ENCODE measurements at regions of chr19 and their contacts with region 1.

Region 1: GRCh38 chr19:41376241-41376997 is at the start of gene TMEM91:
- DNase-seq: peak in 2 of 3 donors; percentile 28 to 36
- H3K4me3 ChIP-seq: peak within 1 kb of the TSS in 6 of 7 experiments; percentile 43 to 85 (median 66)
- H3K27ac ChIP-seq: peak within 1 kb of the TSS in 1 of 2 experiments; percentile 25
- H3K4me1 ChIP-seq: peaks cover 3 to 31% (median 19%) of the 10 kb centered on the region in 4 experiments
- H3K27me3 ChIP-seq: no peaks in the 10 kb centered on the region

Region 2: GRCh38 chr19:41363753-41364523 is 12.5 kb before region 1 on chr19 and contains the start of gene B9D2:
- CTCF ChIA-PET with region 1: interaction called, 38 read pairs
- POLR2A ChIA-PET with region 1: no interaction called
- DNase-seq: peak; percentile 99 to 100 (median 99)
- H3K4me3 ChIP-seq: peak within 1 kb of the TSS; percentile 68 to 93 (median 88)
- H3K27ac ChIP-seq: peak within 1 kb of the TSS; percentile 100
- H3K4me1 ChIP-seq: peaks cover 8 to 54% (median 46%) of the 10 kb centered on the region in 4 experiments
- H3K27me3 ChIP-seq: no peaks in the 10 kb centered on the region

Region 3: DNA sequence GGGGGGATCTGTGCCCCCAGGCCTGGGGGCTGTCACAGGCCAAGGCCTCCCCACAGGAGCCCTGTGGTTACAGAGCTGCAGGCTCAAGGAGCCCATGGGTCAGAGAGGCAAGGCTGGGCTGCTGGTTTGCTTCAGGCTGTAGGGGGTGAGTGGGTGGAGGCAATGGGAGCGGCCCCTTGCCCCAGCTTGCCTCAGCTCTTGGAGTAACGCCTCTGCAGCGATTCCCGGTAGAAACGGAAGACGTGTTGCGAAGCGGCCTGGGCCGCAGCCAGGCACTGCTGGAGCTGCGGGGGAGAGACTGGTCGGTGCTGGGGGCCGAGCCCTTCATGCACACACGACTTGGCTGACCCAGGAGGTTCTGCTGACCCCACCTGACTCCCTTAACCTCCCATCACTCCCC is 10.0 kb after region 1 on chr19:
- CTCF ChIA-PET with region 1: interaction called, 10 read pairs
- POLR2A ChIA-PET with region 1: no interaction called
- DNase-seq: no peak
- H3K4me3 ChIP-seq: no peak overlapping the region
- H3K27ac ChIP-seq: no peak overlapping the region
- H3K4me1 ChIP-seq: no peaks in the 10 kb centered on the region
- H3K27me3 ChIP-seq: no peaks in the 10 kb centered on the region

Region 4: DNA sequence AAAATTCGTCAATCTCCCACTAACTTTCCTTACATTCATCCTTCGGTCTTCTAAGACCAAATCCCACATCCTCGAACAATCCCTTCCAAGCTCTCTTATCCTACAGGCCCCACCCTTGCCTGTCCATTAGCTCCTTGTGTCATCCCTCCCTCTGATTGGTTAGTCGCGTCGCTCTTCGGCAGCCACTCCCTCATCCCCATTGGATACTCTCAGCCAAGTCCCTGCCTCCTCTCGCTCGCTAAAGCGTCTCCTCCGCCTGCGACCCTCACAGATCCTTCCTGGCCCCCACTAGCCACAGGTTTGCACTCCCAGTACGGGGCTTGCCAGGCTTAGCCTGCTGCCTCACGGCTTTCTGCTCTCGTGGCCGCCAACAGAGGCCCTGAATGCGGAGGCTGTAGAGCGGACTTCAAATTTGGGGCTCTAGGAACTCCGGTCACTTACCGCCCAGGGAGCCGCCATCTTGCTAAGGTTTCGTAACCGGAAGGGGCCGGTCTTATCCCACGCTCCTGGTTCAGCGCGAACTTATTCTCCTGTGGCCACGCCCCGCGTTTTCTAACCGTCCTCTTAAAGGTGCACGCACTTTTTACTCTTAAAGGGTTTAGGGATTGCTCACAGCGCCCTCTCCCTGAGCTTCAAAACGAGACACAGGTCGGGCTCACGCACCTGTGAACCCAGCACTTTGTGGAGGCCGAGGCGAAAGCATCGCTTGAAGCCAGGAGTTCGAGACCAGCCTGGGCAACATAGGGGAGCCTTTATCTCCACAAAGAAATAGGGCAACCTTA is 63.2 kb after region 1 on chr19 and contains the start of gene DMAC2:
- CTCF ChIA-PET with region 1: no interaction called
- POLR2A ChIA-PET with region 1: no interaction called
- DNase-seq: peak; percentile 97 to 98 (median 97)
- H3K4me3 ChIP-seq: peak within 1 kb of the TSS; percentile 71 to 100 (median 93)
- H3K27ac ChIP-seq: peak within 1 kb of the TSS; percentile 80 to 88
- H3K4me1 ChIP-seq: peaks cover 4 to 22% (median 13%) of the 10 kb centered on the region in 4 experiments
- H3K27me3 ChIP-seq: no peaks in the 10 kb centered on the region